Naive thymus-derived CD4-positive, alpha-beta T cell (primary cell): ENCODE measurements at regions of chr5 and their contacts with region 1.

Region 1: GRCh38 chr5:132526290-132526973 is 16.9 kb downstream of the IL5 start:
- DNase-seq: peak in 8 of 9 donors; percentile 14 to 67 (median 50)
- ATAC-seq: peak; percentile 81
- H3K4me3 ChIP-seq: no peak overlapping the region
- H3K4me3 Mint-ChIP-seq: peak overlapping the region in 1 of 10 donors; percentile 15
- H3K27ac ChIP-seq: no peak overlapping the region
- H3K27ac Mint-ChIP-seq: no peak overlapping the region
- H3K4me1 ChIP-seq: peaks cover 4% of the 10 kb centered on the region in 2 donors
- H3K4me1 Mint-ChIP-seq: peaks cover 12 to 51% (median 16%) of the 10 kb centered on the region in 7 donors
- H3K27me3 ChIP-seq: no peaks in the 10 kb centered on the region
- H3K27me3 Mint-ChIP-seq: peaks cover 0 to 1% (median under 1%) of the 10 kb centered on the region in 5 donors

Region 2: DNA sequence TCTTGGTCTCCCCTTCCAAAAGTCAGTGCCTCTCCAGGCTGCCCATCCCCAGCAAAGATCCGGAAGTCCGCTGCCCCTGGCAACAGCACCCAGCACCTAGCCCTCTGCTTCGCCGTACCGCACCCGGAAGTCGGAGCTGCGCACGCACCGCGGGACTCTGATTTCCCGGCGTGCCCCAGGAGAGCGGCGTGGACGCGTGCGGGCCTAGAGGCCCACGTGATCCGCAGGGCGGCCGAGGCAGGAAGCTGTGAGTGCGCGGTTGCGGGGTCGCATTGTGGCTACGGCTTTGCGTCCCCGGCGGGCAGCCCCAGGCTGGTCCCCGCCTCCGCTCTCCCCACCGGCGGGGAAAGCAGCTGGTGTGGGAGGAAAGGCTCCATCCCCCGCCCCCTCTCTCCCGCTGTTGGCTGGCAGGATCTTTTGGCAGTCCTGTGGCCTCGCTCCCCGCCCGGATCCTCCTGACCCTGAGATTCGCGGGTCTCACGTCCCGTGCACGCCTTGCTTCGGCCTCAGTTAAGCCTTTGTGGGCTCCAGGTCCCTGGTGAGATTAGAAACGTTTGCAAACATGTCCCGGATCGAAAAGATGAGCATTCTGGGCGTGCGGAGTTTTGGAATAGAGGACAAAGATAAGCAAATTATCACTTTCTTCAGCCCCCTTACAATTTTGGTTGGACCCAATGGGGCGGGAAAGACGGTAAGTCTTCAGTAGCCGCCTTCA is 30.5 kb after region 1 on chr5 and contains the start of gene RAD50:
- CTCF ChIA-PET with region 1: no interaction called
- POLR2A ChIA-PET with region 1: interaction called, 5 read pairs
- intact Hi-C with region 1: loop called (anchors 1 to 5 kb)
- DNase-seq: peak; percentile 81 to 92 (median 90)
- ATAC-seq: peak; percentile 97
- H3K4me3 ChIP-seq: peak within 1 kb of the TSS; percentile 78
- H3K4me3 Mint-ChIP-seq: peak within 1 kb of the TSS; percentile 90 to 99 (median 96)
- H3K27ac ChIP-seq: peak within 1 kb of the TSS; percentile 76
- H3K27ac Mint-ChIP-seq: peak within 1 kb of the TSS; percentile 90 to 98 (median 97)
- H3K4me1 ChIP-seq: peaks cover 5 to 14% of the 10 kb centered on the region in 2 donors
- H3K4me1 Mint-ChIP-seq: peaks cover 10 to 37% (median 29%) of the 10 kb centered on the region in 7 donors
- H3K27me3 ChIP-seq: no peaks in the 10 kb centered on the region
- H3K27me3 Mint-ChIP-seq: no peaks in the 10 kb centered on the region
- total RNA-seq, gene RAD50: 18.0 to 35.4 (median 32.2) TPM

Region 3: DNA sequence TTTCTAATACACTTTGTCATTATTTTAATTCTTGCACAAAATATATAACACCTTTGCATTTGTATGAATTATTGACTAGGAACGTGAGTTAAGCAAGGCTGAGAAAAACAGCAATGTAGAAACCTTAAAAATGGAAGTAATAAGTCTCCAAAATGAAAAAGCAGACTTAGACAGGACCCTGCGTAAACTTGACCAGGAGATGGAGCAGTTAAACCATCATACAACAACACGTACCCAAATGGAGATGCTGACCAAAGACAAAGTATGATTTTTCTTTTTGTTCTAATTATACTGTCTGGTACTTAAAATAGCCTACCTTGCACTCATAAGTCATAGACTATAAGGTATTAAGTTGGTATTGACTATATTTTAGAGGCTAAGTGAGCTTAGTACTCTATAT is 64.7 kb after region 1 on chr5:
- CTCF ChIA-PET with region 1: no interaction called
- POLR2A ChIA-PET with region 1: no interaction called
- intact Hi-C with region 1: loop called (anchors 1 to 5 kb)
- DNase-seq: peak in 1 of 9 donors; percentile 1
- ATAC-seq: no peak
- H3K4me3 ChIP-seq: no peak overlapping the region
- H3K4me3 Mint-ChIP-seq: no peak overlapping the region
- H3K27ac ChIP-seq: no peak overlapping the region
- H3K27ac Mint-ChIP-seq: no peak overlapping the region
- H3K4me1 ChIP-seq: no peaks in the 10 kb centered on the region
- H3K4me1 Mint-ChIP-seq: peaks cover 0 to 18% (median 0%) of the 10 kb centered on the region in 7 donors
- H3K27me3 ChIP-seq: no peaks in the 10 kb centered on the region
- H3K27me3 Mint-ChIP-seq: no peaks in the 10 kb centered on the region

Region 4: GRCh38 chr5:132714456-132715307 is 188.2 kb after region 1 on chr5:
- CTCF ChIA-PET with region 1: no interaction called
- POLR2A ChIA-PET with region 1: no interaction called
- intact Hi-C with region 1: loop called (anchors 1 to 5 kb)
- DNase-seq: peak in 5 of 9 donors; percentile 6 to 23 (median 14)
- ATAC-seq: peak; percentile 34
- H3K4me3 ChIP-seq: no peak overlapping the region
- H3K4me3 Mint-ChIP-seq: peak overlapping the region in 6 of 10 donors; percentile 28 to 70 (median 46)
- H3K27ac ChIP-seq: no peak overlapping the region
- H3K27ac Mint-ChIP-seq: peak overlapping the region in 3 of 9 donors; percentile 22 to 78 (median 60)
- H3K4me1 ChIP-seq: no peaks in the 10 kb centered on the region
- H3K4me1 Mint-ChIP-seq: peaks cover 0 to 20% (median 9%) of the 10 kb centered on the region in 7 donors
- H3K27me3 ChIP-seq: no peaks in the 10 kb centered on the region
- H3K27me3 Mint-ChIP-seq: no peaks in the 10 kb centered on the region

Region 5: GRCh38 chr5:132820162-132820754 is 293.8 kb after region 1 on chr5:
- CTCF ChIA-PET with region 1: interaction called, 22 read pairs
- POLR2A ChIA-PET with region 1: interaction called, 3 read pairs
- intact Hi-C with region 1: loop called (anchors 1 kb)
- DNase-seq: peak; percentile 60 to 86 (median 75)
- ATAC-seq: peak; percentile 93
- H3K4me3 ChIP-seq: peak overlapping the region; percentile 34
- H3K4me3 Mint-ChIP-seq: peak overlapping the region; percentile 5 to 86 (median 72)
- H3K27ac ChIP-seq: no peak overlapping the region
- H3K27ac Mint-ChIP-seq: peak overlapping the region in 2 of 9 donors; percentile 16 to 33
- H3K4me1 ChIP-seq: peaks cover 0 to 6% of the 10 kb centered on the region in 2 donors
- H3K4me1 Mint-ChIP-seq: peaks cover 6 to 18% (median 10%) of the 10 kb centered on the region in 7 donors
- H3K27me3 ChIP-seq: peaks cover 3 to 14% of the 10 kb centered on the region in 2 donors
- H3K27me3 Mint-ChIP-seq: peaks cover 13 to 51% (median 23%) of the 10 kb centered on the region in 5 donors